ENCODE measurements at regions of chr4 and their contacts with region 1.

Region 1: GRCh38 chr4:100421361-100421978 is 96.4 kb downstream of the EMCN start:
- DNase-seq: peak; percentile 43
- ATAC-seq: peak; percentile 68
- H3K4me3 ChIP-seq: peak overlapping the region; percentile 42; the same call in 1 of the 2 replicates
- H3K27ac ChIP-seq: peak overlapping the region; percentile 10; the same call in 1 of the 2 replicates
- H3K4me1 ChIP-seq: peaks cover 12% of the 10 kb centered on the region; the same call in 1 of the 2 replicates
- H3K27me3 ChIP-seq: no peaks in the 10 kb centered on the region
- CTCF ChIP-seq: peak; percentile 71

Region 2: DNA sequence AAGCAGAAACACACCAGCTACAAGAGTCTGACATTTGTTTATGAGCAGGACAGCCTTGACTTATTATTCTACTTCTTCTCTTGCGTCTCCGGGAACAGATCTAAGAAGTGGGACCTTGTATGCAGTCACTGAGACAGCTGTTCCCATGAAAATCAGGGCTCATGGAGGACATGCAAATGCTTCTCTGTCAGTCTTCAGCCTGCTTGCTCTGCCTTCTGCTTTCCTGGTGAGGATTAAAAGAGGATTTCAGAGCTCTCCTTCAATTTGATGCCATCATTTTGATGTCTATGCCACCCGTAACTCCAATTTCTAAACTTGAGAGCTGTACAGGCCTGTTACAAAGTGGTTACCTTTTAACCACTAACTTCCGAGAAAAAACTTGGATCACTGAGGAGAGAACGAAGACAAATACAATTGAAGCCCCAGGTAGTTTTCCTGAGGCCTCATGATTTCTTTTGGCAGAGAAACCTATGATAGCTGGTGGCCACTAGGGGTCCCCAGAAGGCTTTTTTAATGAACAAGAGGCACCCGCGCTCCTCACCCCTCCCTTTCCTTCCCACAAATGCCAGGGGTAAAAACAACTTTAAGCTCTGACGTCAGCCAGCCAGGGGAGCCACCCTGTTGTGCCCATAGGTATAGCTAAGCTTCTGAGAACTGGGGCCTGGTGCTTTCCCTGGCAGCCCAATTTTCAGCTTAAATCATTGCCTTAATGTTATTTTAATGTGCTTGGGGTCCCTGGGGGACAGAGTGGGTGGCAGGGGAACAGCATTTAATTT is 328.2 kb before region 1 on chr4:
- CTCF ChIA-PET with region 1: no interaction called
- POLR2A ChIA-PET with region 1: no interaction called
- intact Hi-C with region 1: loop called (anchors 10 kb)
- DNase-seq: peak; percentile 86
- ATAC-seq: peak; percentile 89
- H3K4me3 ChIP-seq: no peak overlapping the region
- H3K27ac ChIP-seq: no peak overlapping the region
- H3K4me1 ChIP-seq: peaks cover 10% of the 10 kb centered on the region
- H3K27me3 ChIP-seq: no peaks in the 10 kb centered on the region
- CTCF ChIP-seq: peak; percentile 77

Region 3: DNA sequence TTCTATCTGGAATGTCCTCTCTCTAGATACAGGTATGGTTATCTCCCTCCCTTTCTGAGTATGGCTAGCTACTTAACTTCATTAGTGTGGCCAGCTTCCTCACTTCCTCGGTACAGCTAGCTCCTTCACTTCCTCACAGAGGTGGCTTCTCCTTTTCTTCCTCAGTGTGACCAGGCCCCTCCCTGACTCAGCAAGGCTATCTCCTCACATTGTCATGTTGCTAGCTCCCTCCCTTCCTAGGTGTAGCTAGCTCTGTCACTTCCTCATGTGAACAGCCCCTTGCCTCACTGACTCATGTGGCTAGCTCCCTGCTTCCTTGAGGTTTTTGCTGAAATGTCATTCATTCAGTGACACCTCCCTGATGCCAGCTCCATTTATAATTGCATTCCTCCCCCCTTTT is 163.9 kb before region 1 on chr4:
- CTCF ChIA-PET with region 1: no interaction called
- POLR2A ChIA-PET with region 1: no interaction called
- intact Hi-C with region 1: no loop called
- DNase-seq: peak; percentile 53
- ATAC-seq: peak; percentile 62
- H3K4me3 ChIP-seq: no peak overlapping the region
- H3K27ac ChIP-seq: no peak overlapping the region
- H3K4me1 ChIP-seq: peaks cover 7% of the 10 kb centered on the region; the same call in 1 of the 2 replicates
- H3K27me3 ChIP-seq: no peaks in the 10 kb centered on the region
- CTCF ChIP-seq: no peak

Region 4: DNA sequence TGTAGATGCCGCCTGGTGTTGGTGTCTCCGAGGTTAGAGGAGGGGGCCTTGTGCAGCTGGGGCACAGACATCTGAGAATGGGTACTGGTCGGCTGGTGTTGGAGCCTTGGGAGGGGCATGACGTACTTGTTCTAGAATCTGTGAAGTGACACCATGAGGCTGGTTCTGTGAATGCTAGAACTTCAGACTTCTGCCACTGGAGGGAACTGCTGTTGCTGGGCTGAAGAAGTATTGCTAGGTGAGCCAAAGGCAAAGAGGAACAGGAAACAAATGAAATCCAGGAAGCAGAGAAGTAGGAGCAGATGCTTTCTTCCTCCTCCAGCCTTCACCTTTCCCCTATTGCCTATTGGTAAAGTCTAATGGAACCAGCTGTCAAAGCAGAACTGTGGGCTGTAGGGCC is 110.3 kb before region 1 on chr4:
- CTCF ChIA-PET with region 1: no interaction called
- POLR2A ChIA-PET with region 1: no interaction called
- intact Hi-C with region 1: loop called (anchors 2 kb)
- DNase-seq: peak; percentile 40
- ATAC-seq: peak; percentile 46; the same call in 1 of the 2 replicates
- H3K4me3 ChIP-seq: no peak overlapping the region
- H3K27ac ChIP-seq: no peak overlapping the region
- H3K4me1 ChIP-seq: no peaks in the 10 kb centered on the region
- H3K27me3 ChIP-seq: no peaks in the 10 kb centered on the region
- CTCF ChIP-seq: peak; percentile 51

Region 5: GRCh38 chr4:100880007-100880406 is 458.5 kb after region 1 on chr4:
- CTCF ChIA-PET with region 1: no interaction called
- POLR2A ChIA-PET with region 1: no interaction called
- intact Hi-C with region 1: no loop called
- DNase-seq: no peak
- ATAC-seq: no peak
- H3K4me3 ChIP-seq: no peak overlapping the region
- H3K27ac ChIP-seq: no peak overlapping the region
- H3K4me1 ChIP-seq: no peaks in the 10 kb centered on the region
- H3K27me3 ChIP-seq: no peaks in the 10 kb centered on the region
- CTCF ChIP-seq: no peak

Region 6: GRCh38 chr4:101020956-101021355 is 599.5 kb after region 1 on chr4:
- CTCF ChIA-PET with region 1: no interaction called
- POLR2A ChIA-PET with region 1: no interaction called
- intact Hi-C with region 1: loop called (anchors 5 kb)
- DNase-seq: peak; percentile 69
- ATAC-seq: peak; percentile 87
- H3K4me3 ChIP-seq: no peak overlapping the region
- H3K27ac ChIP-seq: peak overlapping the region; percentile 83
- H3K4me1 ChIP-seq: peaks cover 29% of the 10 kb centered on the region
- H3K27me3 ChIP-seq: no peaks in the 10 kb centered on the region
- CTCF ChIP-seq: no peak

Region 7: GRCh38 chr4:101865501-101866099 is 1444.1 kb after region 1 on chr4:
- CTCF ChIA-PET with region 1: no interaction called
- POLR2A ChIA-PET with region 1: no interaction called
- intact Hi-C with region 1: loop called (anchors 5 kb)
- DNase-seq: peak; percentile 83
- ATAC-seq: peak; percentile 89
- H3K4me3 ChIP-seq: peak overlapping the region; percentile 1; the same call in 1 of the 2 replicates
- H3K27ac ChIP-seq: peak overlapping the region; percentile 91
- H3K4me1 ChIP-seq: peaks cover 24% of the 10 kb centered on the region
- H3K27me3 ChIP-seq: no peaks in the 10 kb centered on the region
- CTCF ChIP-seq: no peak